Activated CD4-positive, alpha-beta memory T cell treated with anti-CD3 and anti-CD28 coated beads for 36 hours (primary cell): ENCODE measurements at regions of chr1 and their contacts with region 1.

Region 1: GRCh38 chr1:29033829-29034466 is 89.8 kb downstream of the TMEM200B start:
- DNase-seq: no peak
- H3K4me3 Mint-ChIP-seq: no peak overlapping the region
- H3K27ac Mint-ChIP-seq: no peak overlapping the region
- H3K4me1 Mint-ChIP-seq: no peaks in the 10 kb centered on the region
- H3K27me3 Mint-ChIP-seq: no peaks in the 10 kb centered on the region

Region 2: DNA sequence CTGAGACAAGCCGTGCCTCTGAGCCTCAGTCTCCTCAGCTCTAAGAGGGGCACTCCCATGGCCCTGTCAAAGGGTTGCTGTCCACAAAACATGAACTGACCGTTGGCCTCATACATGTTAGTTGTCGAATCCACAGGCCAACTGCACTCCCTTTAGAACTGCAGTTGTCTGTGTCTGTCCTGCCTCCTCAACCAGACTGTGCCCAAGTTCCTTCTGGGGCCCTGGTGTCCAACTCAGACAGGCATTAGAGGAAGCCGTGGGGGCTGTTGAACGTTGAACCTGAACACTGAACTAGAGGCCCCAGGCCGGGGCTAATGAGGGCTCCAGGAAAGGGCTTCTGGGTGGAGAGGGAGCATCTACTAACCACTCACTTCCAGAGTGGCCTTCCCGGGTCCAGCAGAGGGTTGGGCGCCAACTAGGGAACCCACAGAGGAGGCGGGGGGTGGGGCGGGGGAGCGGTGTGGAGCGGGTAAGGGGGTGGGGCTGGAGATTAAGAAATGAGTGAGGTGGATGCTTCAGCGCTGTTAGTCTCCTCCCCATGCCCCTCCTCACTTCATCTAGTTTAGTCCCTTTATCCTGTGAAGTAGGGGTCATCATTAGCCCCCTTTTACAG is 442.1 kb before region 1 on chr1 and contains the start of gene RAB42:
- CTCF ChIA-PET with region 1: no interaction called
- POLR2A ChIA-PET with region 1: no interaction called
- intact Hi-C with region 1: no loop called
- DNase-seq: peak; percentile 18
- H3K4me3 Mint-ChIP-seq: peak within 1 kb of the TSS; percentile 67
- H3K27ac Mint-ChIP-seq: no peak within 1 kb of the TSS
- H3K4me1 Mint-ChIP-seq: peaks cover 5% of the 10 kb centered on the region
- H3K27me3 Mint-ChIP-seq: peaks cover 5% of the 10 kb centered on the region
- total RNA-seq, gene RAB42: not detected

Region 3: GRCh38 chr1:28775121-28775944 is 258.6 kb before region 1 on chr1:
- CTCF ChIA-PET with region 1: interaction called, 3 read pairs
- POLR2A ChIA-PET with region 1: no interaction called
- intact Hi-C with region 1: loop called (anchors 10 kb)
- DNase-seq: peak; percentile 79
- H3K4me3 Mint-ChIP-seq: peak overlapping the region; percentile 68
- H3K27ac Mint-ChIP-seq: no peak overlapping the region
- H3K4me1 Mint-ChIP-seq: peaks cover 4% of the 10 kb centered on the region
- H3K27me3 Mint-ChIP-seq: no peaks in the 10 kb centered on the region

Region 4: DNA sequence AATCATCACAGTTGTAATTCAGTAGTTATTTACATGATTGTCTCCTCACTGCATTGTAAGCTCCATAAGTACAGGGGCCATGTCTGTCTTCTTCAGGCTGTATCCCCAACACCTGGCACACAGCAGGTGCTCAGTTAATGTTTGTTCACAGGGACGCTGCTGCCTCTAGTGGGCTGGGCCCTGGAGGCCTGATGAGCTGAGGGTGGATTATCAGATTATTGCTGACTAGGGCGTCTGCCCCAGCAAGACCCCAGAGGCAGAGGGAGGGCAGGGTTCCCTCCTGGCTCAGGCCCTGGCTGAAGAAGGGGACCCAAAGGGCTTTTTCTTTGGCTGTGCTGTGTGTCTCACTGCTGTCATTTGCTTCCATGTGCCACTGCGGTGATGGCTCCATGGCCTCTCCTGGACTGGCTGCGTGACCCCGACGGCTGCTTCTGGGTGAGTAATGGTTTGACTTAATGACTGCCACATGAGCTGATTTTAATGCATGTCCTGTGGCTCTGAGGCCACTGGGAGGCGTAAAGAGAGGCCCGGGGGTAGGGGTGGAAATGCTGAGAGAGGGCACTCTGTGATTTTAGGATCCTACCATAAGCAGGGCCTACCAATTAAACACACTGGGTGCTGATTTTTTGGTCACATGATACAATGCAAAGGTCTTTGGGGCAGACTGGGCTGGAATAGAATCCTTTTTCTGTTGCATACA is 140.4 kb before region 1 on chr1:
- CTCF ChIA-PET with region 1: interaction called, 22 read pairs
- POLR2A ChIA-PET with region 1: no interaction called
- intact Hi-C with region 1: no loop called
- DNase-seq: peak; percentile 45
- H3K4me3 Mint-ChIP-seq: no peak overlapping the region
- H3K27ac Mint-ChIP-seq: no peak overlapping the region
- H3K4me1 Mint-ChIP-seq: peaks cover 36% of the 10 kb centered on the region
- H3K27me3 Mint-ChIP-seq: no peaks in the 10 kb centered on the region

Region 5: DNA sequence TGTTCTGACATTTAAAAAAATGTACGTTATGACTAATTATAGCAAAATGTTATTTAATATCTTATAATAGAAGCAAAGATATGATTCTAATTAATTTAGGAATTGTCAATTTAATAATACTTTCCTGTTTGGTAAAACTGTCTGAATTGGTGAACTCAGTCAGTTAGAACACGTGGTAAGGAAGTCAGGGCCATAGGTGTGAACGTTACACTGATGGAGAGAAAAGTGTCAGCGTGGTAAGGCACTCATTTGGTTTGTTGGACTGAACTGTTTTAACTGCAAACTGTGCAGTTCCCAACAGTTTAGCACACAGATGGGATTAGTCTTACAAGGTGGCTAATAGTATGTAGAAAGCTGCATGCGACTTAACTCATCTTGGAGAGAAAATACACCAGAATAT is 16.7 kb before region 1 on chr1:
- CTCF ChIA-PET with region 1: interaction called, 20 read pairs
- POLR2A ChIA-PET with region 1: no interaction called
- intact Hi-C with region 1: no loop called
- DNase-seq: no peak
- H3K4me3 Mint-ChIP-seq: no peak overlapping the region
- H3K27ac Mint-ChIP-seq: no peak overlapping the region
- H3K4me1 Mint-ChIP-seq: no peaks in the 10 kb centered on the region
- H3K27me3 Mint-ChIP-seq: no peaks in the 10 kb centered on the region

Region 6: GRCh38 chr1:29022620-29023019 is 11.3 kb before region 1 on chr1:
- CTCF ChIA-PET with region 1: interaction called, 20 read pairs
- POLR2A ChIA-PET with region 1: no interaction called
- intact Hi-C with region 1: no loop called
- DNase-seq: no peak
- H3K4me3 Mint-ChIP-seq: no peak overlapping the region
- H3K27ac Mint-ChIP-seq: no peak overlapping the region
- H3K4me1 Mint-ChIP-seq: no peaks in the 10 kb centered on the region
- H3K27me3 Mint-ChIP-seq: no peaks in the 10 kb centered on the region

Region 7: DNA sequence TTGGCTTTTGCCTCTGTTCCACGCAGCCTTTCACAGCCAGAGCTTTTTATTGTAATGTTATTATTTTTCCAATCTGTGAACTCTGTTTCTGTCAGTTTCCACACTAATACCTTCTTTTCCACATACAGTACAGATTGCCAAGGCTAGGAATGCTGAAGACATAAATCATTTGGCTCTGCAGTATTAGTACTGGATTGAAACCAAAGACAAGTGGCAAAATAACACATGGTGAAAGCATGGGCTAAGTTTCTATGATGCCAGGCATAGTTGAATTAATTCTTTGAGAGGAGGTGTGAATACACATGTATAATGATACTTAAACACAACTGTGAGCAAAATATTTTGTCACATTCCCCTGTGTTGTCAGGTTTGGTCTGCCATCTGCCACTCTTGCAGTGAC is 16.2 kb after region 1 on chr1:
- CTCF ChIA-PET with region 1: interaction called, 17 read pairs
- POLR2A ChIA-PET with region 1: no interaction called
- intact Hi-C with region 1: no loop called
- DNase-seq: no peak
- H3K4me3 Mint-ChIP-seq: no peak overlapping the region
- H3K27ac Mint-ChIP-seq: no peak overlapping the region
- H3K4me1 Mint-ChIP-seq: peaks cover 7% of the 10 kb centered on the region
- H3K27me3 Mint-ChIP-seq: no peaks in the 10 kb centered on the region

Region 8: DNA sequence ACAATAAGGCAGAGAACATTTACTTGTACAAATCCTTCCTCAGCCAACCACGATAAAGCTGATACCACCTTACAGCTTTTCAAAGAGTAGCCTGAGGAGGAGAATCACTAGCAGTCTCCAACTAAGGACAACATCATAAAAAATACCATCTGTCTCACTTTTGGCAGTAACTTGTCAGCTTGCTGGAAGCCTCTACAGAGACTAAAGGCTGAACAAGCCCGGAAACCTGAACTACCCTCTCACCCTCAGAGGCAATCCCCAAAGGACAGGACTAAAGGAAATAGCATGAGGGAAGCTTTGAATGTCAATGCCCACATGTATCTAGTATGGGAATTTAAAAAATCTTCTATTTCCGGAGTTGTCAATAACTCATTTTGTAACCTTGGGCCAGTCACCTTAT is 137.1 kb after region 1 on chr1:
- CTCF ChIA-PET with region 1: no interaction called
- POLR2A ChIA-PET with region 1: no interaction called
- intact Hi-C with region 1: no loop called
- DNase-seq: no peak
- H3K4me3 Mint-ChIP-seq: no peak overlapping the region
- H3K27ac Mint-ChIP-seq: peak overlapping the region; percentile 25
- H3K4me1 Mint-ChIP-seq: peaks cover 60% of the 10 kb centered on the region
- H3K27me3 Mint-ChIP-seq: no peaks in the 10 kb centered on the region

Region 9: DNA sequence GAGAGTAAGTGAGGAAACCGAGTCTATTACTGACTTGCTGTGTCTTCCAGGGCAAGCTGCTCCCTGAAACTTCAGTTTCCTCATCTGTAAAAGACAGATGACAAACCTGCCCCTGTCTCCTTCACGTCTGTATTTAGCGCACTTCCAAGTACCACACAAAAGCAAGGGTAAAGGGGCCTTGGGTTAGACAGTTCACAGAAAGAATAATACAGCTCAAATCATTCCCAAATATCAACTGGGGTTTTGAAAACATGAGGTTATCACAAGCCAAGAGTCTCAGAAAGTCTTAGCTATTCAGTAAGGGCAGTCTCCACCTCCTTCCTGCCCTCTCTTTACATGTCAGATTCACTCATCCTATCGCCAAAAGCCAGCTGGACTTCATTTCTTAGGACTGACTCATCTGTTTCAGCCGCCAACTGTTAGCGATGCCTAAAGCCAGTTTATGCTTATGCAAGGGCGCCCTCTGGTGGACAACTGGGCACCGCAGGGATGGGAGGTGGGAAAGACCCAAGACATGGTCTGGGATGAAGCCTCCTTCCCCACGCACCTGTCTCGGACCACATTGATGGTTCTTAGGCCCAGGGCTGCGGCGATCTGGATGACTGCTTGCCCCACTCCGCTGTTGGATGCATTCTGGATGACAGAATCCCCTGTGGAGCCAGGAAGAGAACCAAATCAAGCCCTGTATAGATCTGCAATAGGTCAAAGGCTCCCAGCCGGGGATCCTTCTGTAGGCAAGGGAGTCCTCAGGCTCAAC is 168.8 kb after region 1 on chr1:
- CTCF ChIA-PET with region 1: interaction called, 23 read pairs
- POLR2A ChIA-PET with region 1: no interaction called
- intact Hi-C with region 1: loop called (anchors 2 kb)
- DNase-seq: peak; percentile 94
- H3K4me3 Mint-ChIP-seq: no peak overlapping the region
- H3K27ac Mint-ChIP-seq: peak overlapping the region; percentile 23
- H3K4me1 Mint-ChIP-seq: peaks cover 6% of the 10 kb centered on the region
- H3K27me3 Mint-ChIP-seq: no peaks in the 10 kb centered on the region

Region 10: GRCh38 chr1:29465755-29466154 is 431.8 kb after region 1 on chr1:
- CTCF ChIA-PET with region 1: no interaction called
- POLR2A ChIA-PET with region 1: no interaction called
- intact Hi-C with region 1: no loop called
- DNase-seq: no peak
- H3K4me3 Mint-ChIP-seq: no peak overlapping the region
- H3K27ac Mint-ChIP-seq: no peak overlapping the region
- H3K4me1 Mint-ChIP-seq: no peaks in the 10 kb centered on the region
- H3K27me3 Mint-ChIP-seq: peaks cover 4% of the 10 kb centered on the region